AG04449 (cell line): ENCODE measurements at regions of chr2 and their contacts with region 1.

Region 1: GRCh38 chr2:20097879-20098714 is 46.7 kb upstream of the LAPTM4A start:
- DNase-seq: peak; percentile 47
- H3K4me3 ChIP-seq: no peak overlapping the region
- CTCF ChIP-seq: peak; percentile 93

Region 2: DNA sequence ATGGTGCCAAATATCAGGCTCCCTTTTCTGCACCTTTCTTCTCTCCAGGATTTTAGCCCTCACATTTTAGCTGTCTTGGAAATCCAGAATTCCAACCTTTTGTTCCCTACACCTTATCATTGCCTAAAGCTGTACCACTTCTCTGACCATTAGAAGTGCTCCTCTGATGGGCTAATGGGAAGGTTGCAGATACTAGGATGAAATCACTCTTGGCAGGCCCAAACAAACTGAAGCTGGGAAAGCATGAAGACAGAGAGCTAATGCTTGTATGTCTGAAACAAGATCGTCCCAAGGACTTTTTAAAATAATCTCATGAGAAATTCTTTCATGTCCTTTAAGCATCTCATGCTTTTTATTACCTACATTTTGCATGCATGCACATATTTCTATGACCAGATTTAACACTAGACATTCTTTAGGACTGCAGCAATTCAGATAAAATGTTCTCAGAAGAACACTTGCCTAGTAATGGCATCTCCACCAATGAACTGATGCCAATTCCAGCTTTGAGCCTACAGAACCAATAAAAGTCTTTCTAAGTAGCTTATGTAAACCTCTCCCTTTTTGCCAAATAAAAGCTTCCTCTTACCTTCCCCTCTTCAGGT is 641.3 kb before region 1 on chr2:
- CTCF ChIA-PET with region 1: no interaction called
- POLR2A ChIA-PET with region 1: no interaction called
- DNase-seq: no peak
- H3K4me3 ChIP-seq: no peak overlapping the region
- CTCF ChIP-seq: no peak

Region 3: DNA sequence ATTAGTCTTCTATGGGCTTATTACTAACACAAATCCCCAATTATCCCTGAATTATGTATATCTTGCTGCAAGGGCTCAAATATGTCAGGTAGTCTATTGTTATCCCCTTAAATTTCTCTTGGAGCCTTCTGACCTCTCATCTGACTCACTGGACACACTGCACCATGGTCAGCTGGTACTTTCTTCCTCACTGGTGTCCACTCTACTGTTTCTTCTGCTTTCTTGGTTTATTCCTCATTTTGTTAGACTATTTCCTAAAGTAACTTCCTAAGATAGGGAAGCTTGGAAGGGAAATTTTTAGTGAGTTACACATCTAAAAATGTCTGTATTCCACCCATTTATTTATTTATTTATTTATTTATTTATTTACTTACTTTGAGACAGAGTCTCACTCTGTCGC is 134.7 kb before region 1 on chr2:
- CTCF ChIA-PET with region 1: interaction called, 78 read pairs
- POLR2A ChIA-PET with region 1: no interaction called
- DNase-seq: no peak
- H3K4me3 ChIP-seq: no peak overlapping the region
- CTCF ChIP-seq: no peak

Region 4: GRCh38 chr2:20040489-20041172 is 57.5 kb before region 1 on chr2:
- CTCF ChIA-PET with region 1: interaction called, 18 read pairs
- POLR2A ChIA-PET with region 1: no interaction called
- DNase-seq: no peak
- H3K4me3 ChIP-seq: no peak overlapping the region
- CTCF ChIP-seq: no peak

Region 5: DNA sequence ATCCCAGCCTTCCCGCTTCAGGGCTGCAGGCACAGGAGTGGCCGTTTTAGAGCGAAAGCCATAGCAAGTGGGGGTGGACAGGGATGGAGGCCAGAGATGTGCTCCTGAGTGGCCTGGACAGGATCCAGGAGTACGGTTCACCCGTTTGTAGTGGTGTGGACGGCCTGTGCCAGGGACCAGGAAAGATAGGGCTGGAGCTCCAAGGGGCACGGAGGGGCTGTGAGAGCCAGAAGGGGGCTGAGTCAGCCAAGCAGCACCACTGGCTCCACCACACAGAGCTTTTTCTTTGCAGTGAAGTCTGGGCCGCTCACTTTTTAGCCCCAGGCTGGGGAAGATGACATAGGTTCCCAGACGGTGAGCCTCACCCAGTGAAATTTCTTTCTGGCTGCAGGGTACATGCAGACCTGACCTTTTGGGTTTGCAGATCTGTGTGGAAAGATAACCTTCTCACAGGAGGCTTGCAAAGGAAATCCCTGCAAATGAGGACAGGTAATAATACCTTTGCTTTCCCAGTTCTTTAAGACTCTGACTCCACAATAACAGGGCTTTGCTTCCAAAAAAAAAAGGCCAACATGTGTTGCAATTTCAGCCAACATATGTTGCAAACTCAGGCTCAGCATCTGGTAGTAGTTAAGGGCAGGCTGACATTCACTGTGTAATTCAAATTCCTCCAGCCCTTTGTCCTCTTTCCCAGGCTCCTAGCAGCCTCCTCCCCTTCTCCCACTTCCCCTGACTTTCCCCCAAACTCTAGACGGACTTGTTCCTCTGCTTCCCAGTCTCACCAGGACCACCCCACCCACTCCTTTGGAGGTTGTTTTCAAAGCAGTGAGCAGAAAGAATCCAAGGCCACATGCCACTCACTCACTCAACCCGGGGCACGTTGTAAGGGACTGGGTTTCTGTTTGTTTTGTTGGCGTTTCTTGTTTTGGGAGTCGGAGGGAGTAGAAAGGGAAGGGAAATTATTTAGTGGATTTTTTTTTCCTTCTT is 26.4 kb before region 1 on chr2:
- CTCF ChIA-PET with region 1: interaction called, 10 read pairs
- POLR2A ChIA-PET with region 1: interaction called, 3 read pairs
- DNase-seq: peak; percentile 92
- H3K4me3 ChIP-seq: peak overlapping the region; percentile 32
- CTCF ChIP-seq: no peak